ENCODE measurements at regions of chr20 and their contacts with region 1.

Region 1: GRCh38 chr20:16761305-16761829 is 13.2 kb downstream of the OTOR start:
- DNase-seq: peak; percentile 53
- H3K4me3 ChIP-seq: peak overlapping the region in 1 of 2 experiments; percentile 30; a peak in 1 of 4 replicates
- H3K27ac ChIP-seq: no peak overlapping the region
- H3K4me1 ChIP-seq: peaks cover 0 to 5% of the 10 kb centered on the region in 2 experiments; a peak in 1 of 4 replicates
- H3K27me3 ChIP-seq: no peaks in the 10 kb centered on the region
- CTCF ChIP-seq: peak; percentile 75
- EP300 ChIP-seq: no peak
- RAD21 ChIP-seq: peak; percentile 99

Region 2: DNA sequence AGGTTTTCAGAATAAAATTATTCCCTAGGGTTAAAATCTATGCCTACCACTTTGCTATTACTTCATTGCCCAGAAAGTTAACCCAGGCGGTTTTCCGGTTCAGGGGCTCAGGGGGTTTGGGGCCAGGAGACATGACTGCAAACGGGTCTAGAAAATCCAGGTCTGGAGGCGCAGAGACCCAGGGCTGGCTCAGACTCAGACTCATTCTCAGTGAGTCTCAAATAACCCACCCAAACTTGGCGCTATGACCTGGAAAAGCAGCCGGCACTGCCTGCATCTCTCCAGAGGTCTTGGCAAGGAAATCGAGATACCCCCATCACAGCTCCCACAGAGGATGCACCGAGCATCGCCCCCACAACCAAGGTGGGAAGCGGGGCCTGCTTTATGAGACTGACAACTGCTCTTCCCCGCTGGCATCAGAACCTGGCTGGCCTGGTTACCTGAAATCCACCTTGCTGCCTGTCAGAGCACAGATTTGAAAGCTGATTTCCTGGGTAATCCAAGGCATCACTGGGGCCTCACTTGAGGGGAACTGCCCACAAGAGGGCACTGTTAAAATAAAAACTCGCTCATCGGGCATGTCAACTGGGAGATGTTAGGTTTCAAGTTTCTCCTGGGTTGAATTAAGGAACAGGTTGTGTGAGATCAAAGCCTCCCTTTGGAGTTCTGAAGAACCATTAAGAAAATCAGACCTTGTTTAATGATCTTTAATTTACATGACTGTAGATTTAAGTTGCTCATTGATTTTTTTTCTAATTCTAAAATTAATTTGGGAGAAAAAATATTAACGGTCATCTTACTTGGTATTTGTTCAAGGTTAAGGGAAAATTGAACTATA is 243.2 kb before region 1 on chr20:
- CTCF ChIA-PET with region 1: interaction called, 32 read pairs
- POLR2A ChIA-PET with region 1: no interaction called
- DNase-seq: peak; percentile 60
- H3K4me3 ChIP-seq: no peak overlapping the region; a peak in 1 of 4 replicates
- H3K27ac ChIP-seq: no peak overlapping the region; a peak in 1 of 4 replicates
- H3K4me1 ChIP-seq: peaks cover 0 to 15% of the 10 kb centered on the region in 2 experiments; a peak in 1 of 4 replicates
- H3K27me3 ChIP-seq: no peaks in the 10 kb centered on the region
- CTCF ChIP-seq: peak; percentile 69
- EP300 ChIP-seq: no peak
- RAD21 ChIP-seq: peak; percentile 71

Region 3: GRCh38 chr20:16573001-16573965 is 188.1 kb before region 1 on chr20 and contains the start of gene KIF16B:
- CTCF ChIA-PET with region 1: interaction called, 10 read pairs
- POLR2A ChIA-PET with region 1: no interaction called
- DNase-seq: peak; percentile 96
- H3K4me3 ChIP-seq: peak within 1 kb of the TSS; percentile 71 to 72
- H3K27ac ChIP-seq: peak within 1 kb of the TSS; percentile 9 to 83; a peak in 3 of 4 replicates
- H3K4me1 ChIP-seq: peaks cover 0 to 13% of the 10 kb centered on the region in 2 experiments; a peak in 1 of 4 replicates
- H3K27me3 ChIP-seq: no peaks in the 10 kb centered on the region
- CTCF ChIP-seq: no peak
- EP300 ChIP-seq: 0 out of 4 replicates have a peak, but pooled peaks of 1 of the 2 experiments have one; percentile 11
- RAD21 ChIP-seq: peak; percentile 44
- polyA plus RNA-seq, gene KIF16B: 3.3 and 3.7 TPM in 2 replicates

Region 4: GRCh38 chr20:16747291-16747827 is 14.0 kb before region 1 on chr20:
- CTCF ChIA-PET with region 1: interaction called, 18 read pairs
- POLR2A ChIA-PET with region 1: no interaction called
- DNase-seq: no peak
- H3K4me3 ChIP-seq: no peak overlapping the region
- H3K27ac ChIP-seq: peak overlapping the region in 1 of 2 experiments; percentile 76; a peak in 1 of 4 replicates
- H3K4me1 ChIP-seq: peaks cover 0 to 3% of the 10 kb centered on the region in 2 experiments; a peak in 2 of 4 replicates
- H3K27me3 ChIP-seq: 0 out of 2 replicates have a peak, but pooled peaks cover 5% of the 10 kb centered on the region
- CTCF ChIP-seq: no peak
- EP300 ChIP-seq: no peak
- RAD21 ChIP-seq: no peak

Region 5: DNA sequence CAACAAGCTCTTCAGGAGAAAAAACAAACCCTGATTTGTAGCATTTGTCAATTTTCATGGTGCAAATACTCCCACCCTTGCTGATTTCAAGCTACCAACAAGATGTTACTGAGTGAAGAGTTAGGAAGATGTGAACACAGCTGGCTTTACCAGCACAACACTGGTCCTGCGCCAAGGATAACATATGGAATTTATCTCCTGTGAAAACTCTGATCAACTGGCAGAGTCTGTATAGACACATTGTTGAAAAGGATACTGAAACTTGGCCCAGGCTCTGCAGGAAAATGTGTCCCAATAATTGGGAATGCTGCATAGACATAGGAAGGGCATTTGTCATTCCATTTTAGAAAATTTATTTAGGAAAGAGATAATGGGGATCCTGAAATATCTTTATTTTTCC is 15.8 kb after region 1 on chr20:
- CTCF ChIA-PET with region 1: interaction called, 15 read pairs
- POLR2A ChIA-PET with region 1: no interaction called
- DNase-seq: no peak
- H3K4me3 ChIP-seq: no peak overlapping the region
- H3K27ac ChIP-seq: no peak overlapping the region
- H3K4me1 ChIP-seq: no peaks in the 10 kb centered on the region
- H3K27me3 ChIP-seq: no peaks in the 10 kb centered on the region
- CTCF ChIP-seq: no peak
- EP300 ChIP-seq: no peak
- RAD21 ChIP-seq: no peak